PC-3 (cell line): ENCODE measurements at regions of chr1 and their contacts with region 1.

Region 1: DNA sequence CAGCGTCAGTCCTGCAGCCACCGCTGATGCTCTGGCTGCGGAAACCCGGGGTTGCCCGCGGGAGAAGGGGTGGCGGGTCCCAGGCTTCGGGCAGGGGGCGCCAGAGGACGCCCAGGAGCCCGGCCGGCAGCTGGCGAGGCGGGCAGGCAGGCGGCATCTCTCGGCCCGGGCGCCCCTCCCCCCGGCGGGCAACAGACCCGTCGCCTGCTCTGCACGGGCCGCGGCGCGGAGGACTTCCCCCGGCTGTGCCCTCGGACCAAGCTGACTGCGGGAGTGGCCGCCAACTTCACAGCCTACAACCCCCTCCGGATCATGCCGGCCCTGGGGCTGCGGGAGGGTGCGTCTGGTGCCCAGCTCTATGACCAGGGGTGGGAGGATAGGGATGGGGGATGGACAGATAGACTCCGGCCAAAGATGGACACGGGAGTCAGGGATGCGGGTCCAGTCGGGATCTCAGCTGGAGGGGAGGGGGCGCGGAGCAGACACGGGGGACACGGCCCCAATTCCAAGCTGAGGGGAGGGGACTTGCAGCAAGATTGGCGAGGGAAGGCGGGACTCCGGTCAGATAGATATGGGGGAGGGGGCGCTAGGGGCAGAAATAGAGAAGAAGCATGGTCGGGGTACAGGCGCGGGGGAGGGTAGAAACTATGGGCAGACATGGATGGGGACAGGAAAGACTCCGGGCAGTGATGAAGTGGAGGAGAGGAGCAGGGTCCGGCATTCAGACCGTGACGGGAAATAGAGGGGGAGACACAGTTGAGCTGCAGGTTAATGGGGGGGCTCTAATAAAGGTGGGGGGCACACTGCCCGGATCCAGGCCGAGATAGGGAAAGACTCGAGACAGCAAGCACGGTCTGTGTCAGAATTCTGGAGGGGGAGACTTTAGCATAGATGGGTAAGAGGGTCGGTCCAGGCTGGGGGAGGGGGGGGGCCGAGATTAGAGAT is 1.1 kb downstream of the ADGRB2 start:
- DNase-seq: peak; percentile 76
- ATAC-seq: peak; percentile 56
- H3K4me3 ChIP-seq: peak overlapping the region; percentile 78
- H3K27ac ChIP-seq: no peak overlapping the region
- H3K4me1 ChIP-seq: peaks cover 24% of the 10 kb centered on the region
- H3K27me3 ChIP-seq: no peaks in the 10 kb centered on the region
- CTCF ChIP-seq: peak; percentile 69

Region 2: DNA sequence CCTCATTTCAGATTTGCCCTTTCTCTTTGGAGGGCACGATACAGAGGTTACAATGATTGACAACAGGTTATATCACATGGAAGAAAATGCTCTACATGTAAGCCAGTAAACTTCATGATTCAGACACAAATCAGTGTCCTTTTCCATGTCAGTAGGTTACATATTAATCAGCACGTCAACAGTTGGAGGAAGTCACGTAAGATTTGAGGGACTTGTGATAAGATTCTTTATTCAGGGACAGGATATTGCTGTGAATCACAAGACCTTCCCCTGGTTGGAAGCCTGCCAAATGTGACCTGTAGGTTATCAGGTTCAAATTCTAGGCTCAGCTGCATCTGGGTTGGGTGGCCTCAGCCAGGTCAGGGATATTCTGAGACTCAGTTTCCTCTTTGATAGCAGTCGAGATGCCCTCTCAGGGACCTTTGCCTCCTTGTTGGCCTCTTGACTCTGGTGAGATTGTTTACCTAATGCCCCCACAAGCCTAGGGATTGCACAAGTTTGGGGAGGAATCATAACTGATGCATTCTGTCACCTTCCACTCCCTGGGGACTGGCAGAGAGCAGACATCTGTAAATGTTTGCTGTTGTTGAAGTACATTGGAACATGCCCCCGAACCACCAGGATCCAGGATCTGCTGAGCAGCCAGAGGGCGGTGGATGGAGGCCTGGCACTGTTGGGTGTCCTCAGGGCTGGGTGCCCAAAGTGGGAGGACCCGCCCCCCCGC is 318.1 kb before region 1 on chr1:
- CTCF ChIA-PET with region 1: no interaction called
- POLR2A ChIA-PET with region 1: no interaction called
- intact Hi-C with region 1: no loop called
- DNase-seq: no peak
- ATAC-seq: no peak
- H3K4me3 ChIP-seq: no peak overlapping the region
- H3K27ac ChIP-seq: no peak overlapping the region
- H3K4me1 ChIP-seq: no peaks in the 10 kb centered on the region
- H3K27me3 ChIP-seq: 0 out of 2 replicates have a peak, but pooled peaks cover 2% of the 10 kb centered on the region
- CTCF ChIP-seq: no peak

Region 3: DNA sequence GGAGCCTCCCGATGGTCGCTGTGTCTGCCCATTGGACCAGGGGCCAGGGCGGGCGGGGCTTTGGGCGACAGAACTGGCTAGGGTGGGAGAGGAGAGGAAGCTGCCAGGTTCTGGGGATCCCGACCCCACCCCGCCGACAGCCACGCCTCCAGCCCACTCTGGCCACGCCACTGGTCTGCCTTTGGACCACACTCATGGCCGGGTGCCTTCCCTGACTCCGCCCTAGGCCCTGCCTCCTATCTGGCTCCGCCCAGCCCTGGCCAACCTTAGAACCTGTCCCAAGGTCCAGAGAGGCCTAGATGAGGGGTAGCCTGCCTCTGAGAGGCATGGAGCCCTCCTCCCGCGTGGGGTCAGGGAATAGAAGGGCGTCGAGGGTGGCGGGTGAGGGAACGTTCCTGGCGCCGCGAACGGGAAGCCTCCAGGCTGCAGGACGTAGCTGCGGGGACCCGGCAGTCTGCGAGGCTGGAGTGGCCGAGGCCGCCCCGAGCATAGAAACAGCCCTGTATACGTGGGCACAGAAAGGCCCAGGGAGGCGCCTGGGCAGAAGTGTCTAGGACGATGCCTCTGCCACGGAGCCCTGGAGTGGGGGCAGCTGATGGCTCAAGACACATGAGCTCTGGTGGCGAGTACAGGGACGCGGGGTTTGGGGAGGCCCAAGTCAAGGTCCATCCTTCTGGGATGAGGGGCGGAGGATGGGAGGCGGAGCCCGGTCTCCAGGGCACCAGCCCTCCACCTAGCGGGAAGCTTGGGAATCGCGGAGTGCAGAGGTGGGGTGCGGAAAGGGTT is 47.7 kb before region 1 on chr1:
- CTCF ChIA-PET with region 1: interaction called, 5 read pairs
- POLR2A ChIA-PET with region 1: no interaction called
- intact Hi-C with region 1: loop called (anchors 5 kb)
- DNase-seq: peak; percentile 87
- ATAC-seq: peak; percentile 93
- H3K4me3 ChIP-seq: peak overlapping the region; percentile 66
- H3K27ac ChIP-seq: peak overlapping the region; percentile 60
- H3K4me1 ChIP-seq: peaks cover 53% of the 10 kb centered on the region
- H3K27me3 ChIP-seq: no peaks in the 10 kb centered on the region
- CTCF ChIP-seq: peak; percentile 77

Region 4: DNA sequence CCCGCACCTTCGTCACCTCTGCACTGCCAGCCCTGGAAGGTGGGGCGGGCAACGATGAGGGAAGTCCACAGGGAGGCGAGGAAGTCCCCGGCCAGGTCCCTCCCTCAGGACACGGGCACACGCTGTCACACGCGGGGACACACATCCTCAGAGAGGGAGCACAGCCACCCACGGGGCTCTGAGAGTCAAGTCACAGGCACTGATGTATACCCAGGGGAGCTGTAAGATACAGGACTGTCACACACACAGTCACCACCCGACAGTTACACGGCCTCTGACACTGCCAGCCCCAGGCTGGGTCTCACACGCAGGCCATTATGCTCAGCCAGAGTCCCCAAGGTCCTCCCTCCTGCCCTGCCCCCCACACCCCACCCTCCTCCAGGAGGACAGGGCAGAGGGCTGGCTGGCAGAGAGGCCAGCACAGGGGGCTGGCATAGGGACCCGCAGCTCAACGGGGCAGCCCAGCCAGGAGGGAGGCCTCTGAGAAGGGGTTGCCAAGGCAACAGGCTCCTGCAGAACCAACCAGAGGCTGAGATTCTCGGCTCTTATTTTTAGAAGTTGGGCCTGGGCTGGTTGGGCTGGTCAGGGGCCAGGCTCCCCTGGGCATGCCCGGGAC is 18.9 kb after region 1 on chr1:
- CTCF ChIA-PET with region 1: no interaction called
- POLR2A ChIA-PET with region 1: no interaction called
- intact Hi-C with region 1: no loop called
- DNase-seq: no peak
- ATAC-seq: no peak
- H3K4me3 ChIP-seq: no peak overlapping the region
- H3K27ac ChIP-seq: no peak overlapping the region
- H3K4me1 ChIP-seq: no peaks in the 10 kb centered on the region
- H3K27me3 ChIP-seq: no peaks in the 10 kb centered on the region
- CTCF ChIP-seq: no peak